Posterior vena cava (tissue), 2 donors: ENCODE measurements at regions of chr3 and their contacts with region 1.

Region 1: DNA sequence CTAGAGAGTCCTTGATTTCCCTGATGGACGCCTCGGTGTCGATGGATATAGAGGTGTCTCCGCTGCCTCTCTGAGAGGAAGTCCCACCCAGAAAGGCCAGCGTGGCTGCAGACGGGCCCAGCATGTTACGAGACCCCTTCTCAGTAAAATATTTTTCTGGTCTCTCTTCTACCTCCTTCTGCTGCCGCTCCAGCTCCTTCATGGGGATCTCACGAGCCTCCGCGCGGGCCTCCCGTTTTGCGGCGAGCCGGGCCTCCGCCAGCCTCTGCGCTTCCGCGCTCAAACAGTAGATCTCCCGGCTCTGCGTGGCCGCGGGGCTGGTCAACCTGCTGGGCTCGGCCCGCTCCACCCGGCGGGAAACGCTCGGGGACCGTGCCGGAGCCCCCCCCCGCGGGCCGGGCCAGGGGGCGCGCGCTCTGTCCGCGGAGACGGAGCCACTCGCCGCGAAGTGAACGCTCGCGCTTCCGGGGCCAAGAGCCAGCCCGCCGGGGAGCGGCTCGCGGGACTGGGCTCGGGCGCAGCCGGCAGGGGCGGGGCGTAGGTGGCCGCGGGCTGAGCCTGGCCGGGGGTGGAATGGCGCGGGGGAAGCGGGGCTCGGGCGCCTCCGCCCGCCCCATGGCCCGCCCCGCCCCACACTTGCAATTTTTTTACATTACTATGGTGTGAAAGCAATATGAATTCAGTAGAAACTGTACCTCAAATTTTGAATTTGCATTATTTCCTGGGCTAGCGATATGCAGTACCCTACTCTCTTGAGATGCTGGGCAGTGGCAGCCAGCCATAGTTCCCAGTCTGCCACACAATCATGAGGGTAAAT is 10.2 kb upstream of the KCNMB3 start:
- DNase-seq: peak; percentile 92

Region 2: DNA sequence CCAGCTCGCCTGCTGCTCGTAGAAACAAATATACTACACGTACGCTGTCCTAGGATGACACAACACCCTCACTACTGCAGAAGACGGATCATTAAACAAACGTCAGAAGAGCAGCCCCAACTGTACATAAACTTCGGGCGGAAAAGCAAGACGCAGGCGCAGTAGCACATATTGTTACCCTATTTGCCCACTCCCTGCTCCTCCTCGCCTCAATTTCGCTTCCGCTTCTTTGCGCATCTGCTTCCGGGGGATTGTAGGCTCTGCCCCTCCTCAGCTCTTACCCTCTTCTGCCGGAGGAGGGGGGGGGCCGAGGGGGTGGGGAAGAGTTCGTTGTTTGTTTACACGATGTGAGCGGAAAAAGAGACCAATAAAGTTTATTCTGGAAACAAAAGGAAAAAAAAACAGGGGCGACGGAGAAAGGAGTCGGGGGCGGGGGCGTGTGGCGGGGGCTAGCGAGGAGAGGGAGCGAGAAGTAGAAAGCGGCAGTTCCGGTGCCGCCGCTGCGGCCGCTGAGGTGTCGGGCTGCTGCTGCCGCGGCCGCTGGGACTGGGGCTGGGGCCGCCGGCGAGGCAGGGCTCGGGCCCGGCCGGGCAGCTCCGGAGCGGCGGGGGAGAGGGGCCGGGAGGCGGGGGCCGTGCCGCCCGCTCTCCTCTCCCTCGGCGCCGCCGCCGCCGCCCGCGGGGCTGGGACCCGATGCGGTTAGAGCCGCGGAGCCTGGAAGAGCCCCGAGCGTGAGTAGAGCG is 113.1 kb before region 1 on chr3 and contains the start of gene PIK3CA:
- intact Hi-C with region 1: loop called in 1 of 2 experiments (anchors 10 kb)
- DNase-seq: peak; percentile 97
- total RNA-seq, gene PIK3CA: 34.9 to 46.9 TPM

Region 3: GRCh38 chr3:179244878-179245277 is 16.3 kb before region 1 on chr3:
- intact Hi-C with region 1: no loop called
- DNase-seq: no peak